ENCODE measurements at regions of chr1 and their contacts with region 1.

Region 1: GRCh38 chr1:147273409-147274336 is 31.2 kb downstream of the CHD1L start:
- DNase-seq: peak in 1 of 10 donors; percentile 15

Region 2: GRCh38 chr1:147039916-147040315 is 233.8 kb before region 1 on chr1:
- intact Hi-C with region 1: no loop called
- DNase-seq: no peak

Region 3: GRCh38 chr1:147156638-147157037 is 117.0 kb before region 1 on chr1:
- intact Hi-C with region 1: no loop called
- DNase-seq: no peak

Region 4: DNA sequence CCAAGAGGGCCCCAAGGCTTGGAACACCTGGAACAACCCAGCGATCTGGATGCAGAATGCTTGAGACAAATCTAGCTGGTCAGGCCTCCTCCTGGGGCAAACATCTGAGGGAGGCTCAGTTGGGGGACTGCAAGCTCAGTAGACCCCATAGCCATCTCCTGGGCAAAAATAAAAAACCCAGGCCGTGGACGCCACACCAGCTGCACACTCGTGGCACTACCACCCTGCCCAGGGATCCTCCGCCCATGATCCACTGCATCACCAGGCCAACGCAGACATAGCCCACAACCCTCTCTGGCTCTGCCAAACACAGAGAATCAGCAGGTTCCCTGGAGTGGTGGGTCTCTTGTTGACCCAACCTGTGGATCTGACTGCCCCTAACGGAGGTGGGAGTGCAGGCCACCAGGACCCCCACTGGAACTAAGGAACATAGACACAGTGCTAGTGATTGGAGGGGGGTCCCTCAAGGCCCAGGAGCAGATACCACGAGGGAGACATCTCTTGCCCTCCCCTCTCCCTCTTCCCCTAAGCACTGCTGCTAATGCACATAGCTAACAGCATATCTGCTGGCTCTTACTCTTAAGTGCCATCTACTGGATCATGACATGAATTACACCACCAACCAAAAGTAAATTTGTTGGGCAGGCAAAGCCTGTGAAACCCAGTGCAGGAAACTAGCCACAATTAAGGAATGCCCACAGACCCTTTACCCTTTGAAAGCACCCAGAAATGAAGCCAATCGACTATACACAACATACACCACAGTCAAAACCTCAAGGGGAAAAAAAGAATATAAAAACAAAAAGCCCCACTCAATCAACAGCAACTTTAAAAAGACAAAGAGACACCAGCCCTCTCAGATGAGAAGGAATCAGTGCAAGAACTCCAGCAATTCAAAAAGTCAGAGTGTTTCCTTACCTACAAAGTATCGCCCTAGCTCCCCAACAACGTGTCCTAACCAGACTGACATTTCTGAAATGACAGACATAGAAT is 116.2 kb after region 1 on chr1:
- intact Hi-C with region 1: loop called (anchors 1 kb)
- DNase-seq: peak in 2 of 10 donors; percentile 23 to 41